Naive thymus-derived CD4-positive, alpha-beta T cell (primary cell): ENCODE measurements at regions of chr5 and their contacts with region 1.

Region 1: DNA sequence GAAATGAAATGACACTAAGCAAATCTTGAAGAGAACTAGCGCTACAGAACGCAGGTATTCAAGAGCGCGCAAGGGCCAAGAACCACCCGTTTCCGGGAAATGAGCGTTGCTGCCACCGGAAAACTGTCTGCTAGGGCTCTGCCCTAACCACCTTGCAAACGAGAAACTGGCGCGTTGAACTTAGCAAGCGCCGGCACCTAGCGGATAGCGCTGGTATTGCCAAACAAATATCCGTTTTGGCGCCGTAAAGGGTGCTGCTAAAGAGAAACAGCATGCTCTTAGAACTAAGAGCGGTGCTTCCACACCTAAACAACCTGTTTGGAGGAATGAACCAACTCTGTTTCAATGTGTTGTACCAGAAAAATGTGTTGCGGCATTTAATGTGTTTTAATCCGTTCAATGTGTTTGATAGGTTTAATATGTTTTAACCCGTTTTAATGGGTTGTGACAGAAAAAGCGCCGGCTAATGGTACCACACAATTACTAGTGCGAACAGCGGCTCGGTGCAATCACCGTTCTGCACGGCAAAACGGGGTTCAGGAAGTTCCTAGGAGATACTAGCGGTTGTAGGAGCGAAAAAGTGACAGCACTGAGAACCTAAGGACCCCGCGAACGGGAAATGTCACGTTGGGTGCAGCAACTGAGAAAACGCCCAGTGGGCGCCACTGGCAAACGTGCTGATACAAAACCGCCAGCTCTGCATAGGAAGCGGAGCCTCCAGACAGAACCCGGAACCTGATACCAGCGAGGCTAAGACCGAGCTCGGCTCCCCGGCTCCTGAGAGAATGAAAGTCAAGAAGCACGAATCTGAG is at the start of gene ANXA2R:
- DNase-seq: peak; percentile 76 to 98 (median 96)
- ATAC-seq: peak; percentile 72
- H3K4me3 ChIP-seq: peak within 1 kb of the TSS; percentile 73
- H3K4me3 Mint-ChIP-seq: peak within 1 kb of the TSS; percentile 82 to 99 (median 98)
- H3K27ac ChIP-seq: peak within 1 kb of the TSS; percentile 96
- H3K27ac Mint-ChIP-seq: peak within 1 kb of the TSS; percentile 93 to 100 (median 99)
- H3K4me1 ChIP-seq: peaks cover 17 to 31% of the 10 kb centered on the region in 2 donors
- H3K4me1 Mint-ChIP-seq: peaks cover 14 to 75% (median 45%) of the 10 kb centered on the region in 7 donors
- H3K27me3 ChIP-seq: no peaks in the 10 kb centered on the region
- H3K27me3 Mint-ChIP-seq: no peaks in the 10 kb centered on the region
- total RNA-seq, gene ANXA2R: 13.2 to 61.4 (median 42.0) TPM

Region 2: DNA sequence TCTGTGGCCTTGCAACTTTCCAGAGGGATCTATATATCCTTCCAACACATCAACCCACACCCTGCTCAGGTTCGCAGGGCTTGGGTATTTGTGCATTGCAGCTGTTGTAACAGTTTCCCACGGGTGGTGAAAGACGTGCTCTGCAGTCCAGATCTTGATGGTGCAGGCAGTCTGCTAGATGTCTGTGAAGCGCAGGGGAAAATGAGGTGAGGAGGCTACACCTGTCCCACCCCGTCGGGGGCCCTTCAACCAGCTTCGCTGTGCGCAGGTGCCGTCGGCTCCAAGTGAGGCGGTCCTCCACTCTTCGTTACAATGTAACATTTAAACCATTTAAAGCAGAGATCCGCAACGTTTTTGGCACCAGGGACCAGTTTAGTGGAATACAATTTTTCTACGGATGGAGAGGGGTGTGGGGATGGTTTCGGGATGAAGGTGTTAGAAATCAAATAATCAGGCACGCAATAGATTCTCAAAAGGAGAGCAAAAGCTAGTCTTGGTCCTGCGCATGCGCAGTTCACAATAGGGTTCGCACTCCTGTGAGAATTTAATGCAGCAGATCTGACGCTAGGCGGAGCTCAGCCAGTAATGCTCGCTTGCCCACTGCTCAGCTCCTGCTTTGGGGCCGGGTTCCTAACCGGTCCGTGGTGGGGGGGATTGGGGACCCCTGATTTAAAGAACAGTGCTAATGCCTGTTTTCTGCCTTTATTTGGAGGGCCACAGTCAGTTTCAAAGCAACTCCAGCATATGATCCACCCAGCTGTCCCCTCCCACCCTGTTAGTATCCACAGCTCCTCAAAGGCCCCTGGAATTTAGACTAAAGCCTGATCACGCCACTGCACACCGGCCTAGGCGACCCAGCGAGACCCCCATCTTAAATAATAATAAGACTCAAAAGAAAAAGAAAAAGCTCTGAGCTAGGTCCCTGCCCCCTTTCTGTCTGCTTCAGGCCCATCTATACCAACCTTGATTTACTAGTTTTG is 131.7 kb before region 1 on chr5:
- CTCF ChIA-PET with region 1: interaction called, 20 read pairs
- POLR2A ChIA-PET with region 1: interaction called, 124 read pairs
- intact Hi-C with region 1: loop called (anchors 1 kb)
- DNase-seq: peak; percentile 76 to 93 (median 88)
- ATAC-seq: peak; percentile 92
- H3K4me3 ChIP-seq: peak overlapping the region; percentile 72
- H3K4me3 Mint-ChIP-seq: peak overlapping the region; percentile 89 to 98 (median 94)
- H3K27ac ChIP-seq: peak overlapping the region; percentile 76
- H3K27ac Mint-ChIP-seq: peak overlapping the region; percentile 64 to 97 (median 95)
- H3K4me1 ChIP-seq: peaks cover 0 to 4% of the 10 kb centered on the region in 2 donors
- H3K4me1 Mint-ChIP-seq: peaks cover 5 to 22% (median 19%) of the 10 kb centered on the region in 7 donors
- H3K27me3 ChIP-seq: no peaks in the 10 kb centered on the region
- H3K27me3 Mint-ChIP-seq: peaks cover 0 to 43% (median 0%) of the 10 kb centered on the region in 5 donors

Region 3: GRCh38 chr5:43008369-43009153 is 31.9 kb before region 1 on chr5:
- CTCF ChIA-PET with region 1: interaction called, 21 read pairs
- POLR2A ChIA-PET with region 1: interaction called, 436 read pairs
- intact Hi-C with region 1: loop called (anchors 1 kb)
- DNase-seq: peak; percentile 79 to 95 (median 90)
- ATAC-seq: peak; percentile 78
- H3K4me3 ChIP-seq: peak overlapping the region; percentile 72
- H3K4me3 Mint-ChIP-seq: peak overlapping the region; percentile 85 to 98 (median 92)
- H3K27ac ChIP-seq: peak overlapping the region; percentile 92
- H3K27ac Mint-ChIP-seq: peak overlapping the region; percentile 96 to 100 (median 98)
- H3K4me1 ChIP-seq: peaks cover 22 to 24% of the 10 kb centered on the region in 2 donors
- H3K4me1 Mint-ChIP-seq: peaks cover 17 to 47% (median 29%) of the 10 kb centered on the region in 7 donors
- H3K27me3 ChIP-seq: no peaks in the 10 kb centered on the region
- H3K27me3 Mint-ChIP-seq: peaks cover 0 to 4% (median 0%) of the 10 kb centered on the region in 5 donors

Region 4: DNA sequence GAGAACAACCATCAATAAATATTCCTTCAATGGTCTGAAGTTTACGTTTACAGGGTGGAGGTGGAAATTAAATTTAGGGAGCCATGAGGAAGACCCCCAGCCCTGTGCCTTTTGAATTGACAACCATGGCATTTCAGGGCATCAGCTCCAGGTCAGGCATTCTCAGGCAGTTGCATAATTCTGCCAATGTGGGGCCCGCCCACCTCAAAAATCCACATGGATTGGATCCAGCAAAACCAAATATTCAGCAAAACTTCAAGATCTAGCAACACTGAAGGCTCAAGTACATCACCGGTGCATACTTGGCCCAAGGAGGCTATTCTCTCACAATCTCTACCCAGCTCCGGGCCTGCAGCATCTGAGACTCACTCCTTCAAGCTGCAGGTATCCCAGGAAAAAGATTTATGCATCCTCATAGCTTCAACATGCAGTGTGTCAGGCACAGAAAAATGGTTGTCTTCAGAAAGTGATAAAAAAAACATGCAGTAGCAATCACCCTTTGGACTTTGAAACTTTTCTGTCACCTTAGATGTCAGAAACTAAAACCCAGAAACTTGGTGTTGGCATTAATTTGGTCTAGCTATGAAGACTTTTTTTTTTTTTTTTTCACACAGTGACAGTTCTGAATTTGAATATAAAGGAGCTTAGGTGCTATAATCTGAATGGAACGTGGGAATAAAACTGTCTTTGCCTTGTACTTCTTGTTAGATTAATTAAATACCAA is 21.0 kb after region 1 on chr5:
- CTCF ChIA-PET with region 1: interaction called, 46 read pairs
- POLR2A ChIA-PET with region 1: interaction called, 595 read pairs
- intact Hi-C with region 1: loop called (anchors 1 kb)
- DNase-seq: no peak
- ATAC-seq: no peak
- H3K4me3 ChIP-seq: no peak overlapping the region
- H3K4me3 Mint-ChIP-seq: no peak overlapping the region
- H3K27ac ChIP-seq: no peak overlapping the region
- H3K27ac Mint-ChIP-seq: peak overlapping the region in 8 of 9 donors; percentile 0 to 85 (median 68)
- H3K4me1 ChIP-seq: peaks cover 0 to 8% of the 10 kb centered on the region in 2 donors
- H3K4me1 Mint-ChIP-seq: peaks cover 0 to 29% (median 14%) of the 10 kb centered on the region in 7 donors
- H3K27me3 ChIP-seq: no peaks in the 10 kb centered on the region
- H3K27me3 Mint-ChIP-seq: no peaks in the 10 kb centered on the region

Region 5: DNA sequence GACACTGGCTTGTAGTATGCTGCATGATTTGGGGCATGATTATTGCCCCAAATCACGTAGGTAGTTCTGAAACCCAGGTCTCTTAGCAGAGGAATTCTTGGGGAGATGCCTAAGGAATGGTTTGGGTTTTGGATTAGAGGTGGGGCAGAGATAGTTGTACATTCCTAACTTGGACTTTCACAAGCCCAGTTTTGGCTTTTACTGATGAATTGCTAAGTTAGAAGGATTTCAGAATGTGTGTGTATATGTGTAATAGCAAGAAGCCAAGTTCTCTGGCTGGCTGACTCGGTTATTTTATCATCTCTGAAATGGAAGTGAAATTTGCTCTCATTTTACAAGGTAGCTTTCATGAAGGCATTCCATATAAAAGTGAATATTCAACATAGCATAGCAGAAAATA is 56.4 kb after region 1 on chr5:
- CTCF ChIA-PET with region 1: no interaction called
- POLR2A ChIA-PET with region 1: no interaction called
- intact Hi-C with region 1: no loop called
- DNase-seq: no peak
- ATAC-seq: no peak
- H3K4me3 ChIP-seq: no peak overlapping the region
- H3K4me3 Mint-ChIP-seq: no peak overlapping the region
- H3K27ac ChIP-seq: no peak overlapping the region
- H3K27ac Mint-ChIP-seq: peak overlapping the region in 3 of 9 donors; percentile 6 to 70 (median 12)
- H3K4me1 ChIP-seq: no peaks in the 10 kb centered on the region
- H3K4me1 Mint-ChIP-seq: peaks cover 5 to 17% (median 10%) of the 10 kb centered on the region in 7 donors
- H3K27me3 ChIP-seq: no peaks in the 10 kb centered on the region
- H3K27me3 Mint-ChIP-seq: no peaks in the 10 kb centered on the region

Region 6: GRCh38 chr5:43110606-43111442 is 70.3 kb after region 1 on chr5:
- CTCF ChIA-PET with region 1: interaction called, 6 read pairs
- POLR2A ChIA-PET with region 1: interaction called, 30 read pairs
- intact Hi-C with region 1: no loop called
- DNase-seq: peak in 7 of 9 donors; percentile 44 to 59 (median 51)
- ATAC-seq: peak; percentile 87
- H3K4me3 ChIP-seq: no peak overlapping the region
- H3K4me3 Mint-ChIP-seq: peak overlapping the region; percentile 37 to 86 (median 60)
- H3K27ac ChIP-seq: peak overlapping the region; percentile 54
- H3K27ac Mint-ChIP-seq: peak overlapping the region; percentile 66 to 97 (median 89)
- H3K4me1 ChIP-seq: peaks cover 0 to 28% of the 10 kb centered on the region in 2 donors
- H3K4me1 Mint-ChIP-seq: peaks cover 13 to 35% (median 28%) of the 10 kb centered on the region in 7 donors
- H3K27me3 ChIP-seq: no peaks in the 10 kb centered on the region
- H3K27me3 Mint-ChIP-seq: no peaks in the 10 kb centered on the region

Region 7: GRCh38 chr5:43556857-43557542 is 516.5 kb after region 1 on chr5 and contains the start of gene PAIP1:
- CTCF ChIA-PET with region 1: no interaction called
- POLR2A ChIA-PET with region 1: no interaction called
- intact Hi-C with region 1: loop called (anchors 1 to 2 kb)
- DNase-seq: peak; percentile 80 to 89 (median 87)
- ATAC-seq: peak; percentile 89
- H3K4me3 ChIP-seq: peak within 1 kb of the TSS; percentile 79
- H3K4me3 Mint-ChIP-seq: peak within 1 kb of the TSS in 7 of 10 donors; percentile 88 to 97 (median 95)
- H3K27ac ChIP-seq: peak within 1 kb of the TSS; percentile 96
- H3K27ac Mint-ChIP-seq: peak within 1 kb of the TSS; percentile 91 to 99 (median 98)
- H3K4me1 ChIP-seq: peaks cover 17 to 30% of the 10 kb centered on the region in 2 donors
- H3K4me1 Mint-ChIP-seq: peaks cover 6 to 17% (median 7%) of the 10 kb centered on the region in 7 donors
- H3K27me3 ChIP-seq: no peaks in the 10 kb centered on the region
- H3K27me3 Mint-ChIP-seq: peaks cover 0 to 18% (median 5%) of the 10 kb centered on the region in 5 donors
- total RNA-seq, gene PAIP1: 20.7 to 41.7 (median 39.2) TPM